Activated CD4-positive, alpha-beta T cell treated with anti-CD3 and anti-CD28 coated beads for 36 hours (primary cell): ENCODE measurements at regions of chr7 and their contacts with region 1.

Region 1: DNA sequence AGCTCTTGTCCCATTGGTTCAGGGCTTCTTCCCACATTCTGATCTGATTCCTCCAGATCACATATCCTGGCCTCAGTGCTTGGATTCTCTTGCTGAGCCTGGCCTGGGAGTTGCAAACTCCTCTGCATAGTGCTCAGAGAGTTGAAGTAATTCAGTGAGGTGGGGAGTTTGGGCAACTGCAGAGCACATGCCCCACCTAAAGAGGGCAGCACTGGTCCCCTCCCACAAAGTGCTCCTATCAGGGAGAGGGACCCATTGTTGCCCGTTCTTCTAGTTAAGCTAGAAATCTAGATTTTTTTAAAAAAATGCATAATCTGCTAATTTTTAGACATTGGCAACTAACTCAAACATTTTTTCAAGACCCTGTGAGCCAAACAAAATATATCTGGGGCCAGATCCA is 45.1 kb downstream of the CHN2 start:
- DNase-seq: peak; percentile 49
- ATAC-seq: no peak
- H3K4me3 Mint-ChIP-seq: no peak overlapping the region
- H3K27ac Mint-ChIP-seq: no peak overlapping the region
- H3K4me1 Mint-ChIP-seq: peaks cover 20% of the 10 kb centered on the region
- H3K27me3 Mint-ChIP-seq: peaks cover 5% of the 10 kb centered on the region

Region 2: GRCh38 chr7:29194594-29195427 is 44.8 kb before region 1 on chr7 and contains the start of gene CHN2:
- CTCF ChIA-PET with region 1: no interaction called
- POLR2A ChIA-PET with region 1: no interaction called
- intact Hi-C with region 1: loop called in 1 of 2 experiments (anchors 2 kb)
- DNase-seq: peak; percentile 68
- ATAC-seq: peak; percentile 85
- H3K4me3 Mint-ChIP-seq: peak within 1 kb of the TSS; percentile 80
- H3K27ac Mint-ChIP-seq: peak within 1 kb of the TSS; percentile 80
- H3K4me1 Mint-ChIP-seq: peaks cover 16% of the 10 kb centered on the region
- H3K27me3 Mint-ChIP-seq: peaks cover 49% of the 10 kb centered on the region
- total RNA-seq, gene CHN2: 0.25 to 0.39 TPM

Region 3: DNA sequence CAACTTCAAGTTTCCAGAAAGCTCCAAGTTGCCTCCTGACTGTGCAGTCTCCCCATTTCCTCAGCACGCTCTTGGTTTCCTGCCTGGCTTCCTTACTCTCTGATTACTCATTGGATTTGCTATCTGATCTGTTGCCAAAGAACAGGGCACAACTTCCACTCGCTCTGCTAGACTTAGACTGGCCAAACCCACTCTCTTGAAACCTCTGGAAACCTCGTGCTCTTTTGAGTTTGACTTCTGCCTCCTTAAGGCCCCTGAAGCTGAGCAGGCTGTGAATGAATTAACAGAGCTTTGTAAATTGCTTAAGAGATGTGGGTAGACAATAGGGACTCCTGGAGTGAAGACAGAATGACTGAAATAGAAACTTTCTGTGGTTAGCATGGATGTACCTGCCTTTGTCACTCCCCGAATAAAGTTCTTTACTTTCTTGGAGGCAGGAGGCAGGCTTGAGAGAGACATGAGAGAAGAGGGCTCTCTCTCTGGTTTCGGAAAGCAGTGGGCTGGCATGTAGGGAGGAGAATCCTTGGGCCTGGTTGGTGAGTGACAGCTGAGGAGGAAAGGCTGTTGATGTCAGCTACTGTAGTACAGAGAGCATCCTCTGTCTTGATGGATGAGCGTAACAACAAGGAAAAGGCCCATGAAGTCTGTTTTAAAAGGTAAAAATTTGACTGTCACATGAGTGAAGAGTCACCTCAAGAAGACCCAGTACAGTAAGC is 25.7 kb after region 1 on chr7:
- CTCF ChIA-PET with region 1: no interaction called
- POLR2A ChIA-PET with region 1: interaction called, 3 read pairs
- intact Hi-C with region 1: loop called (anchors 1 kb)
- DNase-seq: peak; percentile 11
- ATAC-seq: peak; percentile 93
- H3K4me3 Mint-ChIP-seq: no peak overlapping the region
- H3K27ac Mint-ChIP-seq: no peak overlapping the region
- H3K4me1 Mint-ChIP-seq: peaks cover 10% of the 10 kb centered on the region
- H3K27me3 Mint-ChIP-seq: peaks cover 10% of the 10 kb centered on the region

Region 4: DNA sequence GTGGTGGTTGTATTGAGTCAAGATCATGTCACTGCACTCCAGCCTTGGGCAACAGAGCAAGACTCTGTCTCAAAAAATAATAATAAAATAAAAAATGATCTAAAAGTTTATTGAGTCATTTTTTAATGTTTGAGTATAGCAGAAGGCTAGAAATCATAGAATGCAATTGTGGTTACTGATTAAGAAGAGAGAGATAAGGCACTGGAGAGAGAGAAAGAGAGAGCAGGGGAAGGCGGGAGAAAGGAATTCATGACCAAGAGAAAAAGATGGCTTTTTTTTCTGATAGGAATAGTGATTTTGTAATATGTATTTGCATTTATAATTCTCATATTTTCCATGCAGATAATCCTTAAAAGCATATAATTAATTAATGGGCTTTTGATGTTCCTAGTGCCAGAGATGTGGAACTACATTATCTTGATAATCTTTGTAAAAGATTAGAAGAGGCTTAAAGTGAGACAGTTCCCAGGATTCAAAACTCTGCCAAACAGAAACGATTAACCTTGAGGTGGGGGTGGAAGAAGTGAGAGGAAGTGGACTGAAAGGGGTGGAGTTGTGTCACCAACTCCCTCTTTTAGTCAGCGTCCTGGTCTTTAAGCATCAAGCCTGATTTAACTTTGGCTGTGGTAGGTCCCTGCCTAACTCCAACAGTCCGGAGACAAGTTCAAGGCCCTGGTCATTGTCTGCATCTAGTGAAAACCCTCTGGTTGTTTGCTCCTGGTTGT is 31.1 kb after region 1 on chr7:
- CTCF ChIA-PET with region 1: no interaction called
- POLR2A ChIA-PET with region 1: interaction called, 3 read pairs
- intact Hi-C with region 1: loop called (anchors 1 kb)
- DNase-seq: peak; percentile 41
- ATAC-seq: peak; percentile 88
- H3K4me3 Mint-ChIP-seq: no peak overlapping the region
- H3K27ac Mint-ChIP-seq: no peak overlapping the region
- H3K4me1 Mint-ChIP-seq: peaks cover 18% of the 10 kb centered on the region
- H3K27me3 Mint-ChIP-seq: peaks cover 13% of the 10 kb centered on the region

Region 5: GRCh38 chr7:29285444-29285793 is 45.8 kb after region 1 on chr7:
- CTCF ChIA-PET with region 1: no interaction called
- POLR2A ChIA-PET with region 1: no interaction called
- intact Hi-C with region 1: loop called (anchors 1 kb)
- DNase-seq: peak; percentile 71
- ATAC-seq: peak; percentile 83
- H3K4me3 Mint-ChIP-seq: no peak overlapping the region
- H3K27ac Mint-ChIP-seq: no peak overlapping the region
- H3K4me1 Mint-ChIP-seq: peaks cover 26% of the 10 kb centered on the region
- H3K27me3 Mint-ChIP-seq: peaks cover 33% of the 10 kb centered on the region

Region 6: GRCh38 chr7:29297194-29297890 is 57.7 kb after region 1 on chr7:
- CTCF ChIA-PET with region 1: no interaction called
- POLR2A ChIA-PET with region 1: no interaction called
- intact Hi-C with region 1: no loop called
- DNase-seq: peak; percentile 38
- ATAC-seq: no peak
- H3K4me3 Mint-ChIP-seq: no peak overlapping the region
- H3K27ac Mint-ChIP-seq: no peak overlapping the region
- H3K4me1 Mint-ChIP-seq: no peaks in the 10 kb centered on the region
- H3K27me3 Mint-ChIP-seq: peaks cover 4% of the 10 kb centered on the region